CD8-positive, alpha-beta T cell (primary cell): ENCODE measurements at regions of chr9 and their contacts with region 1.

Region 1: GRCh38 chr9:2132484-2133082 is 117.4 kb downstream of the SMARCA2 start:
- DNase-seq: peak in 2 of 9 experiments; percentile 11 to 25
- ATAC-seq: no peak
- H3K4me3 ChIP-seq: no peak overlapping the region
- H3K4me3 Mint-ChIP-seq: no peak overlapping the region
- H3K27ac ChIP-seq: no peak overlapping the region
- H3K27ac Mint-ChIP-seq: no peak overlapping the region
- H3K4me1 ChIP-seq: no peaks in the 10 kb centered on the region
- H3K4me1 Mint-ChIP-seq: peaks cover 49% of the 10 kb centered on the region
- H3K27me3 ChIP-seq: no peaks in the 10 kb centered on the region
- H3K27me3 Mint-ChIP-seq: no peaks in the 10 kb centered on the region
- CTCF ChIP-seq: peak; percentile 75

Region 2: GRCh38 chr9:2119566-2119965 is 13.0 kb before region 1 on chr9:
- CTCF ChIA-PET with region 1: interaction called, 3 read pairs
- POLR2A ChIA-PET with region 1: no interaction called
- intact Hi-C with region 1: loop called in 1 of 2 experiments (anchors 2 kb)
- DNase-seq: no peak
- ATAC-seq: no peak
- H3K4me3 ChIP-seq: no peak overlapping the region
- H3K4me3 Mint-ChIP-seq: no peak overlapping the region
- H3K27ac ChIP-seq: no peak overlapping the region
- H3K27ac Mint-ChIP-seq: peak overlapping the region; percentile 49
- H3K4me1 ChIP-seq: no peaks in the 10 kb centered on the region
- H3K4me1 Mint-ChIP-seq: peaks cover 9% of the 10 kb centered on the region
- H3K27me3 ChIP-seq: no peaks in the 10 kb centered on the region
- H3K27me3 Mint-ChIP-seq: no peaks in the 10 kb centered on the region
- CTCF ChIP-seq: no peak

Region 3: DNA sequence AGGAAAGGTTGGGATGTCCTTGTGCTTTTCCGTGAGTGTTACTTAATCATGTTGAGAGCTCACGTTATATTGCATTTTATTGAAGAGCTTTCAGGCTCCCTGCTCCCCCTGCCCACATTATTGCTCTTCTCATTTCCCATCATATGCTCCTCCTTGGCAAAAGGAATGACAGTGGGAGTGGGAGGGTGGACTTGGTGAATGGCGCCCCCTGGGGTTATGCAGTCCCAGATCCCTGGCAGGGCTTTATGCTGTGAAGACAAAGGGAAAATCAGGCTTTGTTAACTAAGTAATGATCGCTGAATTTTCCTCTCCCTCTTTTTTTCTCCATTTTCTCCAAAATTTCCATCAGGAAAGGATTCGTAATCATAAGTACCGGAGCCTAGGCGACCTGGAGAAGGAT is 49.2 kb after region 1 on chr9:
- CTCF ChIA-PET with region 1: interaction called, 15 read pairs
- POLR2A ChIA-PET with region 1: no interaction called
- intact Hi-C with region 1: loop called (anchors 2 to 5 kb)
- DNase-seq: peak in 2 of 9 experiments; percentile 22 to 35
- ATAC-seq: no peak
- H3K4me3 ChIP-seq: no peak overlapping the region
- H3K4me3 Mint-ChIP-seq: no peak overlapping the region
- H3K27ac ChIP-seq: no peak overlapping the region
- H3K27ac Mint-ChIP-seq: no peak overlapping the region
- H3K4me1 ChIP-seq: no peaks in the 10 kb centered on the region
- H3K4me1 Mint-ChIP-seq: peaks cover 4% of the 10 kb centered on the region
- H3K27me3 ChIP-seq: no peaks in the 10 kb centered on the region
- H3K27me3 Mint-ChIP-seq: no peaks in the 10 kb centered on the region
- CTCF ChIP-seq: peak; percentile 21

Region 4: GRCh38 chr9:2727966-2728613 is 595.5 kb after region 1 on chr9:
- CTCF ChIA-PET with region 1: no interaction called
- POLR2A ChIA-PET with region 1: no interaction called
- intact Hi-C with region 1: loop called in 1 of 2 experiments (anchors 10 kb)
- DNase-seq: peak in 2 of 9 experiments; percentile 10 to 24
- ATAC-seq: no peak
- H3K4me3 ChIP-seq: no peak overlapping the region
- H3K4me3 Mint-ChIP-seq: no peak overlapping the region
- H3K27ac ChIP-seq: no peak overlapping the region
- H3K27ac Mint-ChIP-seq: no peak overlapping the region
- H3K4me1 ChIP-seq: no peaks in the 10 kb centered on the region
- H3K4me1 Mint-ChIP-seq: no peaks in the 10 kb centered on the region
- H3K27me3 ChIP-seq: no peaks in the 10 kb centered on the region
- H3K27me3 Mint-ChIP-seq: no peaks in the 10 kb centered on the region
- CTCF ChIP-seq: no peak

Region 5: DNA sequence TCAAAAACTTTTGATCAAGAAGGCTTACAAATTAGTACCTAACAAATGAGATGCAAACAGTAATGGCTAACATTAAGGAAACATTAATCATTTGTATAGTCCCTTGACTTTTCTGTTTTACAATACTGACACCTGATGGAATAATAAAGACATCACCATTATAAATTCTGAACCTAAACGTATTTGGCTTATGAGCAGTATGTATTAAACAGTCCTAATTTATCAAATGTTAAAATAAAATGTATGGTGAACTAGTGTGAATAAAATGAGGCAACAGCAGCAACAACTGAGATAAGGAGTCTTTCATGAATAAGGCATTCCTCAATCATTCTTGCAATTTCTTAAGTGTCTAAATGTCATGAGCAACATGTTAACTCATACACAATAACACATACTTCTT is 705.3 kb after region 1 on chr9:
- CTCF ChIA-PET with region 1: interaction called, 3 read pairs
- POLR2A ChIA-PET with region 1: no interaction called
- intact Hi-C with region 1: loop called in 1 of 2 experiments (anchors 5 kb)
- DNase-seq: peak in 1 of 9 experiments; percentile 8
- ATAC-seq: no peak
- H3K4me3 ChIP-seq: no peak overlapping the region
- H3K4me3 Mint-ChIP-seq: no peak overlapping the region
- H3K27ac ChIP-seq: no peak overlapping the region
- H3K27ac Mint-ChIP-seq: peak overlapping the region; percentile 12
- H3K4me1 ChIP-seq: peaks cover 18% of the 10 kb centered on the region
- H3K4me1 Mint-ChIP-seq: peaks cover 23% of the 10 kb centered on the region
- H3K27me3 ChIP-seq: no peaks in the 10 kb centered on the region
- H3K27me3 Mint-ChIP-seq: no peaks in the 10 kb centered on the region
- CTCF ChIP-seq: no peak